ENCODE measurements at regions of chr2 and their contacts with region 1.

Region 1: DNA sequence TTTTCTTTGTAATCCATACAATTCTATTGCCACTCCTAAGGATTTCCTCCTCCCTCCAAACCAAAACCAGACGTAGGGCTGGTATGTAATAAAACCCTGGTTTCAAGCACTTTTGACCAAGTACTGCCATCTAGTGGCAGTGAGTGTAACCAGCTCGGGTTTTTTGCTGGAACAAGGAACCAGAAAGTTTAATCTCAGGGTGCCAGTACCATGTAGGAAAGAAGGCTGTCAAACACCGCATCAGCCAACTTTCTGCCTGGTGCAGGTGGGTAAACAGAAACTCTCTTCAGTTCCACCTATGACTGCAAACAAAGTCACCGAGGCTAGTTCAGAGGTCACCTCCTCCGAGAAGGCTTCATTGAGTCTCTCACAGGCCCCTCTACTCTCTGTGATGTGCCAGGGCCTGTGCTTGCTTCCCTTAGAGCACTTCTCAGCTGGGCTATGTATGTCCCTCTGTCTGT is 10.2 kb upstream of the THNSL2 start:
- DNase-seq: peak in 2 of 3 donors; percentile 45 to 86
- ATAC-seq: peak; percentile 98
- H3K4me3 ChIP-seq: no peak overlapping the region
- H3K4me1 ChIP-seq: peaks cover 3% of the 10 kb centered on the region
- CTCF ChIP-seq: peak; percentile 73

Region 2: GRCh38 chr2:88059979-88060906 is 99.7 kb before region 1 on chr2:
- intact Hi-C with region 1: loop called (anchors 10 kb)
- DNase-seq: no peak
- ATAC-seq: peak; percentile 40
- H3K4me3 ChIP-seq: no peak overlapping the region
- H3K4me1 ChIP-seq: peaks cover 22% of the 10 kb centered on the region
- CTCF ChIP-seq: peak; percentile 53